HAP-1 (cell line): ENCODE measurements at regions of chr11 and their contacts with region 1.

Region 1: DNA sequence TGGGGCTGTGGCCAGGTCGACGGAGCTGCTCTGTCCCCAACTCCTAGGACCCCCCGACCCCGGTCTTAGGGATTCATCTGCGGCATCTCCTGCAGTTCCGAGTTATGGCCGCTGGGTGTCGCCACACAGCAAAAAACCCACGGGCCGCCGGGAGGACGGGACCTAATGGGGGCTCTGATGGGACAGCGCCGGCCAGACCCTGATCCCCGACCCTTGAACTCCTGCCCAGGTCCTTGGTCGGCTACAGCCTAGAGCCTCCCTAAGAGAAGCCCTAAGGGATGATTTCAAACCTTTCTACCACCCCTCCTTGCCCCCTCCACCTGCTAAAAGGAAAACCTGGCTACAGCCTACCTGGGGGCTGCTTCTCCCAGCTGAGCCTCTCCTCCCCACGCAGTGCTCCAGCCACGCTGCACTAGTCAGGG is 30.8 kb upstream of the LRRC10B start:
- DNase-seq: peak in 1 of 2 experiments; percentile 72
- H3K4me3 ChIP-seq: no peak overlapping the region
- H3K4me1 ChIP-seq: no peaks in the 10 kb centered on the region
- H3K27me3 ChIP-seq: peaks cover 43% of the 10 kb centered on the region

Region 2: GRCh38 chr11:61524963-61525587 is 47.3 kb after region 1 on chr11:
- in situ Hi-C with region 1: loop called (anchors 5 kb)
- DNase-seq: no peak
- H3K4me3 ChIP-seq: no peak overlapping the region
- H3K4me1 ChIP-seq: no peaks in the 10 kb centered on the region
- H3K27me3 ChIP-seq: peaks cover 94% of the 10 kb centered on the region

Region 3: GRCh38 chr11:61639816-61640443 is 162.2 kb after region 1 on chr11:
- in situ Hi-C with region 1: loop called (anchors 10 kb)
- DNase-seq: no peak
- H3K4me3 ChIP-seq: no peak overlapping the region
- H3K4me1 ChIP-seq: no peaks in the 10 kb centered on the region
- H3K27me3 ChIP-seq: no peaks in the 10 kb centered on the region